CD8-positive, alpha-beta memory T cell (primary cell): ENCODE measurements at regions of chr16 and their contacts with region 1.

Region 1: DNA sequence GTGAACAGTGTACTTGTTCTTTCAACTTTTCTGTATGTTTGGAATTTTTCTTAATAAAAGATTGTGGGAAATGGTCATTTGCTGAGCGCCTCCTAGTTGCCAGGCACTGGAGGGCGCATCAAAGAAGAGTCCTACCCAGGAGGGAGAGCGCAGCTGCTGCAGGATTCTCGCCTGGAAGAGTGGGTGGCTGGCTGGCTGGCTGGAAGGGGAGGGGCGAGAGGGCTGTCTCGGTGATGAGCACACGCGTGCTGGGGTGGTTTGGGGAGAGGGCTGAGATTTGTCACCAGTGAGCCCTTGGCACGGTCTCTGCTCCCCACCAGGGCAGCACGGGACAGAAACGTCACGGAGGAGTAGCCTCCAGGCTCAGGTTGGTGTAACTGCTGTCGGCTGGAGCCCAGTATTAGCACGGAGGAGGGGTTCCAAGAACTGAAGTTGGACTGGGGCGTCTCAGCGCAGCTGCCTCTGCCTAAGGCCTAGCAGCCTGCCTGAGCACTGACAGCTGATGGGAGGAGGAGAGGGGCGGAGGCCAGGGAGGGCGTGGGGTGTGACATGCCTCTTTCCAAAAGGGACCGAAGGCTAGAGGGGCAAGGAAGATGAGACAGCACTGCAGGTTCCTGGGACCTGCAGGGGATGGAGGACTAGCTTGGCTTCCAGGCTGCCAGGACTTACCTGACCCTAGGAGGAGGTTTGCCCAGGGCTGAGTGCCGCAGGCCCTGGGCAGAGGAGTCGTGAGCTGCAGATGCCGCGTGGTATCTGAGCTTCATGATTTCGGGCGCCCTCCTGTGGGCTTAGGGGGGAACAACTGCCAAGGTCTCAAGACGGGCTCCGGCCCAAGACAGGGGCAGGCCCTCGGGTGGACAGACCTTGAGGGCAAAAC is 5.7 kb downstream of the LDHD start:
- DNase-seq: peak; percentile 67 to 85 (median 71)
- H3K4me3 ChIP-seq: peak overlapping the region; percentile 15
- H3K4me3 Mint-ChIP-seq: peak overlapping the region in 5 of 7 donors; percentile 32 to 66 (median 50)
- H3K27ac ChIP-seq: no peak overlapping the region
- H3K27ac Mint-ChIP-seq: peak overlapping the region in 6 of 8 donors; percentile 68 to 96 (median 85)
- H3K4me1 ChIP-seq: peaks cover 32% of the 10 kb centered on the region
- H3K4me1 Mint-ChIP-seq: peaks cover 28 to 31% (median 29%) of the 10 kb centered on the region in 3 donors
- H3K27me3 ChIP-seq: no peaks in the 10 kb centered on the region
- H3K27me3 Mint-ChIP-seq: peaks cover 0 to 9% of the 10 kb centered on the region in 2 donors

Region 2: GRCh38 chr16:74984535-74985296 is 126.2 kb before region 1 on chr16 and contains the start of gene WDR59:
- CTCF ChIA-PET with region 1: interaction called, 20 read pairs
- POLR2A ChIA-PET with region 1: interaction called, 3 read pairs
- DNase-seq: peak; percentile 98 to 99 (median 98)
- H3K4me3 ChIP-seq: peak within 1 kb of the TSS; percentile 96
- H3K4me3 Mint-ChIP-seq: peak within 1 kb of the TSS; percentile 90 to 99 (median 97)
- H3K27ac ChIP-seq: peak within 1 kb of the TSS; percentile 82
- H3K27ac Mint-ChIP-seq: peak within 1 kb of the TSS; percentile 78 to 97 (median 92)
- H3K4me1 ChIP-seq: peaks cover 8% of the 10 kb centered on the region
- H3K4me1 Mint-ChIP-seq: peaks cover 17 to 28% (median 19%) of the 10 kb centered on the region in 3 donors
- H3K27me3 ChIP-seq: no peaks in the 10 kb centered on the region
- H3K27me3 Mint-ChIP-seq: no peaks in the 10 kb centered on the region
- total RNA-seq, gene WDR59: 55.9 to 56.5 TPM

Region 3: GRCh38 chr16:74998481-74999218 is 112.2 kb before region 1 on chr16 and contains the start of gene ZNRF1:
- CTCF ChIA-PET with region 1: interaction called, 31 read pairs
- POLR2A ChIA-PET with region 1: interaction called, 11 read pairs
- DNase-seq: peak; percentile 66 to 82 (median 71)
- H3K4me3 ChIP-seq: peak within 1 kb of the TSS; percentile 28
- H3K4me3 Mint-ChIP-seq: peak within 1 kb of the TSS; percentile 87 to 94 (median 89)
- H3K27ac ChIP-seq: no peak within 1 kb of the TSS
- H3K27ac Mint-ChIP-seq: peak within 1 kb of the TSS; percentile 59 to 91 (median 85)
- H3K4me1 ChIP-seq: peaks cover 15% of the 10 kb centered on the region
- H3K4me1 Mint-ChIP-seq: peaks cover 14 to 19% (median 17%) of the 10 kb centered on the region in 3 donors
- H3K27me3 ChIP-seq: no peaks in the 10 kb centered on the region
- H3K27me3 Mint-ChIP-seq: peaks cover 6 to 7% of the 10 kb centered on the region in 2 donors
- total RNA-seq, gene ZNRF1: 10.8 to 14.1 TPM

Region 4: GRCh38 chr16:75074920-75075687 is 35.8 kb before region 1 on chr16:
- CTCF ChIA-PET with region 1: interaction called, 12 read pairs
- POLR2A ChIA-PET with region 1: interaction called, 3 read pairs
- DNase-seq: peak; percentile 75 to 90 (median 84)
- H3K4me3 ChIP-seq: peak overlapping the region; percentile 49
- H3K4me3 Mint-ChIP-seq: peak overlapping the region; percentile 3 to 77 (median 52)
- H3K27ac ChIP-seq: peak overlapping the region; percentile 33
- H3K27ac Mint-ChIP-seq: peak overlapping the region; percentile 41 to 93 (median 88)
- H3K4me1 ChIP-seq: peaks cover 41% of the 10 kb centered on the region
- H3K4me1 Mint-ChIP-seq: peaks cover 32 to 51% (median 48%) of the 10 kb centered on the region in 3 donors
- H3K27me3 ChIP-seq: no peaks in the 10 kb centered on the region
- H3K27me3 Mint-ChIP-seq: peaks cover 0 to 5% of the 10 kb centered on the region in 2 donors

Region 5: GRCh38 chr16:75160386-75160785 is 49.5 kb after region 1 on chr16:
- CTCF ChIA-PET with region 1: no interaction called
- POLR2A ChIA-PET with region 1: no interaction called
- DNase-seq: no peak
- H3K4me3 ChIP-seq: no peak overlapping the region
- H3K4me3 Mint-ChIP-seq: no peak overlapping the region
- H3K27ac ChIP-seq: no peak overlapping the region
- H3K27ac Mint-ChIP-seq: no peak overlapping the region
- H3K4me1 ChIP-seq: no peaks in the 10 kb centered on the region
- H3K4me1 Mint-ChIP-seq: peaks cover 5 to 20% (median 7%) of the 10 kb centered on the region in 3 donors
- H3K27me3 ChIP-seq: no peaks in the 10 kb centered on the region
- H3K27me3 Mint-ChIP-seq: no peaks in the 10 kb centered on the region

Region 6: GRCh38 chr16:75206749-75207451 is 96.0 kb after region 1 on chr16 and contains the start of gene CTRB2:
- CTCF ChIA-PET with region 1: no interaction called
- POLR2A ChIA-PET with region 1: no interaction called
- DNase-seq: no peak
- H3K4me3 ChIP-seq: no peak within 1 kb of the TSS
- H3K4me3 Mint-ChIP-seq: no peak within 1 kb of the TSS
- H3K27ac ChIP-seq: no peak within 1 kb of the TSS
- H3K27ac Mint-ChIP-seq: no peak within 1 kb of the TSS
- H3K4me1 ChIP-seq: peaks cover 1% of the 10 kb centered on the region
- H3K4me1 Mint-ChIP-seq: peaks cover 0 to 2% (median 0%) of the 10 kb centered on the region in 3 donors
- H3K27me3 ChIP-seq: no peaks in the 10 kb centered on the region
- H3K27me3 Mint-ChIP-seq: no peaks in the 10 kb centered on the region
- total RNA-seq, gene CTRB2: not detected

Region 7: DNA sequence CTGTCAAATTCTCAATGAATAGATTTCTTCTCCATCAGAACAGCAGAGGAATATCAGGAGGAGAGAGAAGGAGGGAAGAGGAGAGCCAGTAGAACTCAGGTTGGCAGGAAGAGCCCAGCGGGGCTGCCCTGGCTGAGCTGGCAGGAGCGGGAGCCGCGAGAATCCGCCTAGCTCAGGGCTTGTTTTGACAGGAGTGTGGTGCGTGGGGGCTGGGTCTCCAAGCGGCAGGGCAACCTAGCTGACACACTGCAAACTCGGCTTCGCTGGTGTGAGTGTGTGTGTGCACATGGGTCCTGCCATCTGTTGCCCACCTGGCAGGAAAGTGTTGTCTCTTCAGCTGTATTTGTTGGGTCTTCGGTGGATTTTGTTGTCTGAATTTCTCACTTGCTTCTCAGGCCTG is 168.4 kb after region 1 on chr16:
- CTCF ChIA-PET with region 1: no interaction called
- POLR2A ChIA-PET with region 1: no interaction called
- DNase-seq: no peak
- H3K4me3 ChIP-seq: no peak overlapping the region
- H3K4me3 Mint-ChIP-seq: peak overlapping the region in 1 of 7 donors; percentile 48
- H3K27ac ChIP-seq: no peak overlapping the region
- H3K27ac Mint-ChIP-seq: no peak overlapping the region
- H3K4me1 ChIP-seq: no peaks in the 10 kb centered on the region
- H3K4me1 Mint-ChIP-seq: peaks cover 4 to 12% (median 9%) of the 10 kb centered on the region in 3 donors
- H3K27me3 ChIP-seq: no peaks in the 10 kb centered on the region
- H3K27me3 Mint-ChIP-seq: peaks cover 20 to 33% of the 10 kb centered on the region in 2 donors